ENCODE measurements at regions of chr1 and their contacts with region 1.

Region 1: GRCh38 chr1:100955322-100955721 is 59.4 kb downstream of the SLC30A7 start:
- DNase-seq: no peak
- H3K4me3 Mint-ChIP-seq: no peak overlapping the region
- H3K27ac Mint-ChIP-seq: peak overlapping the region; percentile 65
- H3K4me1 Mint-ChIP-seq: peaks cover 62% of the 10 kb centered on the region
- H3K27me3 Mint-ChIP-seq: no peaks in the 10 kb centered on the region

Region 2: DNA sequence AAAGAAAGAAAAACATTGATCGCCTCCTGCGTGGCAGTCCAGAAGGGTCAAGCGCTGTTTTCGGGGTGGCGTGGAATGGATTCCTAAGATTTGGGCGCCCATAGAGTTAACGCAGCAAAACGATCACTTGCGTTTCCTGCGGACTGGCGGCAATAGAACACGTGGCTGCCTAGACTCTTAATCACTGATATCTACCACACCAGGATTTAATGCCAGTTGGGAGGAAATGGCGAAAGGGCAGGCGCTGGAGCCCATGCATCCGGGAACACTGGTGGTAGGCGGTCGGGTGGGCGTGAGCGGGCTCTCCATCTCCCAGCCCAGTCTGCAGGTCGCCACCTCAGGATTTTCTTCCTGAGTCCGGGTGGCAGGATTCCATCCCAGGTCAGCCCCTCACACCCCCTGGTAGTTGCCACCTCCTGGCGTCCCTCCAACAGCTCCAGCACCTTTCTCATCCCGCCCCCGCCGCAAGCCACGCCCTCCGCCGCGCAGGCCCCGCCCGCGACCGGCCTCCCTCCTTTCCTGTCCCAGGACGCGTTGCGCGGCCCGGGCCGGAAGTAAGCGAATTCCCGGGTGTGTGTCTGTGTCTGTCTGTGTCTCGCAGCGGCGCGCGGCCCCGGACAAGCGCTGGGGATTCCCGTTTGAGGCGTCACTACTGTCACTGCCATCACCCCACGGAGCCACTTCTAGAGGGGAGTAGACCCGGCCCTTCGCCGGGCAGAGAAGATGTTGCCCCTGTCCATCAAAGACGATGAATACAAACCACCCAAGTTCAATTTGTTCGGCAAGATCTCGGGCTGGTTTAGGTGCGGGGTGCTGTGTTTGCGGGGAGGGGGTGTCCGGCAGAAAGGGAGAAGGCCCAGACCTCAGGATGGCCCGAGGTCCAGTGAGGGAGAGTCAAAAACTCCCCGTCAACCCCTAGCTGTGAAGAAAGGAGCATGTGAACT is 59.5 kb before region 1 on chr1 and contains the start of gene SLC30A7:
- CTCF ChIA-PET with region 1: no interaction called
- intact Hi-C with region 1: loop called (anchors 2 kb)
- DNase-seq: peak; percentile 98
- H3K4me3 Mint-ChIP-seq: peak within 1 kb of the TSS; percentile 100
- H3K27ac Mint-ChIP-seq: peak within 1 kb of the TSS; percentile 100
- H3K4me1 Mint-ChIP-seq: peaks cover 37% of the 10 kb centered on the region
- H3K27me3 Mint-ChIP-seq: no peaks in the 10 kb centered on the region
- total RNA-seq, gene SLC30A7: 32.4 to 32.6 TPM

Region 3: DNA sequence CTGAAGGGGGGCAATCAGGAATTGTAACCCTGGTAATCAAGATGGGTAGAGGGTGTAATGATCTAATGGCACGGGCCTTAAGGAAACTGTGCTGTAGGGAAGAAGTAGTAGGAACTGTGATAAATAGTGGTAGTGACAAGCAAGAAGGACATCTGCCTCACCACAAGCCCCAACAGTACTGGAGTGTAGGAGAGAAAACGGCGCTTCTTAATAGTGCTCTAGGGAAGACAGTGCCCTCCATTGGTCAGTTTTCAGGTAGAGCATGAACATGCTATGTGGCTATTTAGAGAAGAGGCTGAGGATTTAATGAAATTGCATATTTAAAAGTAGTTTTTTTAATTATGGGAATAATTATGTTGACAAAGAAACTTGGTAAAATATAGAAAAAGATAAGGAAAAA is 27.2 kb before region 1 on chr1:
- CTCF ChIA-PET with region 1: interaction called, 3 read pairs
- intact Hi-C with region 1: loop called (anchors 1 kb)
- DNase-seq: peak; percentile 49
- H3K4me3 Mint-ChIP-seq: no peak overlapping the region
- H3K27ac Mint-ChIP-seq: no peak overlapping the region
- H3K4me1 Mint-ChIP-seq: peaks cover 30% of the 10 kb centered on the region
- H3K27me3 Mint-ChIP-seq: no peaks in the 10 kb centered on the region

Region 4: DNA sequence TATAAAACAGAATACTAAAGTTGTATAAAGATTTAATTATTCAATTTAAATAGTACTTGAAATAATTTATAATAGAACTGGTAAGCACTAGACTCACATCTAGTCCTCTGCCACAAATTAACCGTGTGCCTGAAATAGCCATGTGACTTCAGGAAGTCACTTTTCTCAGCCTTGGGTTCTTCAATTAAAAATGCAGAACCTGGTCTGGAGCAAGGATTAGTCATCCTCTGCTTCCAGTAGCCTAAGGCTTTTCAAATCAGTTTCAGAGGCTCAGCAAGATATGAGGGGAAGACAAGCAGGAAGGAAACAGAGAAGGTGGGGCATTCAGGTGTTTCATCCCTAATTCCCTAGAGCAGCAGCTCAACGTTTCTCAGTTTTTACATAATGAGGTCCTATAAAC is 47.2 kb after region 1 on chr1:
- CTCF ChIA-PET with region 1: no interaction called
- intact Hi-C with region 1: loop called (anchors 1 kb)
- DNase-seq: no peak
- H3K4me3 Mint-ChIP-seq: no peak overlapping the region
- H3K27ac Mint-ChIP-seq: peak overlapping the region; percentile 59
- H3K4me1 Mint-ChIP-seq: peaks cover 52% of the 10 kb centered on the region
- H3K27me3 Mint-ChIP-seq: no peaks in the 10 kb centered on the region

Region 5: GRCh38 chr1:101030881-101031280 is 75.6 kb after region 1 on chr1:
- CTCF ChIA-PET with region 1: no interaction called
- intact Hi-C with region 1: no loop called
- DNase-seq: no peak
- H3K4me3 Mint-ChIP-seq: no peak overlapping the region
- H3K27ac Mint-ChIP-seq: no peak overlapping the region
- H3K4me1 Mint-ChIP-seq: peaks cover 48% of the 10 kb centered on the region
- H3K27me3 Mint-ChIP-seq: no peaks in the 10 kb centered on the region

Region 6: DNA sequence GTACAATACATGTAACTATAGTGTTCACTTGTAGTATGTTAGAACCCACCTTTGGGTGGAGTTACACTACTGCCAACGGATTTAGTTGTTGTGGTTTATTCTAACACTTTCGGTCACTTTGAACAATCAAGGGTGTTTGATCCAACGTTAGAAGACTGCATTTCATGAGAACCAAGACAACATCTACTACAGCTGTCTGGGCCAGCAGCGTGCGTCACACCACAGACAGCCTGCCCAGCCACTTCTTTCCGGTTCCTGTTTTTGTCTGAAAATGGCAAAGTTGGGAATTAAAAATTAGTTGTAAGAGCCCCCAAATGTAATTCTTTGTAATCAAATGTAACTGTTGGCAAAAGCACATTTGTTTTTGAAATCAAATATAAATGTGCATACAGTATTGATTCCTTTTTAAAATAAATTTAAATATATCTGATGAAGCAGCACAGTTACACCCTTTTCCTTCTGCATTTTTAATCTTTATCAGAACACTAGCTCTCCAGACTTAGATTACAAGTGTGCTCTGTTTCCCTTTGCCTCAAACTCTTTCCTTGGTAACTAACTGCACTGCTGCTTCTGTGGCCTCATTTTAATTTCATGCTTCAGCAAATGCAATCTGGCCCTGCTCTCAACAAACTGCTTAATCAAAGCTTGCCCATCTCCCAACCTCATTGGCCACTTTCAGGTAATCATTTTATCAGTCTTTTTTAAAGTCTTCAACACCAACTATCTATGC is 156.9 kb after region 1 on chr1:
- CTCF ChIA-PET with region 1: no interaction called
- intact Hi-C with region 1: loop called (anchors 1 kb)
- DNase-seq: peak; percentile 75
- H3K4me3 Mint-ChIP-seq: peak overlapping the region; percentile 54
- H3K27ac Mint-ChIP-seq: peak overlapping the region; percentile 88
- H3K4me1 Mint-ChIP-seq: peaks cover 56% of the 10 kb centered on the region
- H3K27me3 Mint-ChIP-seq: no peaks in the 10 kb centered on the region

Region 7: DNA sequence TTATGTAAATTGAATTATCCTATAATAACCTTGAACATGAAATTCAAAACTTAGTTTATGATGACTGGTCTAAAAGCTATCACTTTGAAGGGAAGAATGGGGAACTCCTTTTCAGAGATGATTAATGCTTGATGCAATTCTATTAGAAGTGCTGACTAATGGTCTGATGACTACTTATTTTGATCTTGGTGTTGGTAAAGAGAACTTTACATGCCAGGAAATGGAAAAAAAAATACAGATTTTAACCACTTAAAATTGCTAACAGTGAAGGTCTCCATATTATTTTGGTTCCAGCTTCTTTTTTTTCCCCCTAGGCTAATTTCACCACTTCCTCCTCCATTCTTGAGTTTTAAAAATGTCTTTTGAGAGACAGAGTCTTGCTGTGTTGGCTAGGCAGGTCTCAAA is 304.4 kb after region 1 on chr1:
- CTCF ChIA-PET with region 1: no interaction called
- intact Hi-C with region 1: loop called (anchors 1 kb)
- DNase-seq: no peak
- H3K4me3 Mint-ChIP-seq: no peak overlapping the region
- H3K27ac Mint-ChIP-seq: peak overlapping the region; percentile 77
- H3K4me1 Mint-ChIP-seq: peaks cover 67% of the 10 kb centered on the region
- H3K27me3 Mint-ChIP-seq: no peaks in the 10 kb centered on the region

Region 8: DNA sequence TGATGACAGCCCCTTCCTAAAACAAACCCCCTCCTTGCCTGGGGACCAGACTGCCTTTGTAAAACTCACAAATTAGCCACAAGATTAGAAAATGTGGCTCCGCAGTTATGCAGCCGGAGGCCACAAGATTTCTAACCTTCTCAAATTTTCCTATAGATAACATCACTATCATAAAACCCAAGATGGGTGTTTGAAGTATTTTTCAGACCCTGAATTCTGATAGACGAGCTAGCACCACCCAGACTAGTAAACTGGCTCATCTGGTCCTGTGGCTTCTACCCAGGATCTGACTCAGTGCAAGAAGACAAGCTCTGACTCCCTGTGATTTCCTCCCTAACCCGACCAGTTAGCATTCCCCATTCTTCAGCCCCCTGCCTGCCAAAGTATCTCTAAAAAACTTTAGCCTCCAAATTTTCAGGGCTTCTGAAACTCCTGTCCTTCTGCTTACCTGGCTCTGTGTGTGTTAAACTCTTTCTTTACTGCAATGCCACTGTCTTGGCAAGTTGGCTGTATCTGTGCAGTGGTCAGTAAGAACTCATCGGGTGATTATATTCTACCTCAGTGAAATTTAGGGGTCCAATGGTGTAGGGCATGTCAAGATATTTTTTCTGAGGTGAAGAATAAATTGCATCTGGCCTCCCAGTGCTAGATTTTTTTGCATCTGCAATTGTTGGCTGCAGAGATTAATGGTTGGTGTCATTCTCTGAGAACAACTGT is 383.6 kb after region 1 on chr1:
- CTCF ChIA-PET with region 1: no interaction called
- intact Hi-C with region 1: no loop called
- DNase-seq: peak; percentile 25
- H3K4me3 Mint-ChIP-seq: no peak overlapping the region
- H3K27ac Mint-ChIP-seq: no peak overlapping the region
- H3K4me1 Mint-ChIP-seq: peaks cover 6% of the 10 kb centered on the region
- H3K27me3 Mint-ChIP-seq: no peaks in the 10 kb centered on the region

Measured in activated naive CD4-positive, alpha-beta T cell treated with anti-CD3 and anti-CD28 coated beads for 36 hours (primary cell).